ENCODE measurements at regions of chr20 and their contacts with region 1.

Region 1: GRCh38 chr20:543369-544152 is at the start of gene CSNK2A1:
- DNase-seq: peak; percentile 95
- ATAC-seq: peak; percentile 99
- H3K4me3 ChIP-seq: peak within 1 kb of the TSS; percentile 80 to 99
- H3K27ac ChIP-seq: peak within 1 kb of the TSS; percentile 97
- H3K4me1 ChIP-seq: peaks cover 8% of the 10 kb centered on the region; the same call in 1 of the 2 replicates
- H3K27me3 ChIP-seq: no peaks in the 10 kb centered on the region
- CTCF ChIP-seq: no peak
- total RNA-seq, gene CSNK2A1: 191 TPM

Region 2: GRCh38 chr20:324177-325044 is 219.2 kb before region 1 on chr20:
- CTCF ChIA-PET with region 1: no interaction called
- POLR2A ChIA-PET with region 1: no interaction called
- in situ Hi-C with region 1: no loop called
- intact Hi-C with region 1: no loop called
- DNase-seq: peak; percentile 76
- ATAC-seq: peak; percentile 65
- H3K4me3 ChIP-seq: peak overlapping the region; percentile 74 to 97
- H3K27ac ChIP-seq: peak overlapping the region; percentile 97
- H3K4me1 ChIP-seq: peaks cover 17% of the 10 kb centered on the region
- H3K27me3 ChIP-seq: no peaks in the 10 kb centered on the region
- CTCF ChIP-seq: no peak

Region 3: GRCh38 chr20:1392823-1393506 is 849.4 kb after region 1 on chr20 and contains the start of gene FKBP1A:
- CTCF ChIA-PET with region 1: no interaction called
- POLR2A ChIA-PET with region 1: interaction called, 11 read pairs
- in situ Hi-C with region 1: no loop called
- intact Hi-C with region 1: no loop called
- DNase-seq: peak; percentile 75
- ATAC-seq: peak; percentile 96
- H3K4me3 ChIP-seq: peak within 1 kb of the TSS; percentile 75 to 92
- H3K27ac ChIP-seq: peak within 1 kb of the TSS; percentile 97
- H3K4me1 ChIP-seq: peaks cover 35% of the 10 kb centered on the region
- H3K27me3 ChIP-seq: no peaks in the 10 kb centered on the region
- CTCF ChIP-seq: no peak
- total RNA-seq, gene FKBP1A: 695 TPM